HEK293 (cell line): ENCODE measurements at regions of chr4 and their contacts with region 1.

Region 1: DNA sequence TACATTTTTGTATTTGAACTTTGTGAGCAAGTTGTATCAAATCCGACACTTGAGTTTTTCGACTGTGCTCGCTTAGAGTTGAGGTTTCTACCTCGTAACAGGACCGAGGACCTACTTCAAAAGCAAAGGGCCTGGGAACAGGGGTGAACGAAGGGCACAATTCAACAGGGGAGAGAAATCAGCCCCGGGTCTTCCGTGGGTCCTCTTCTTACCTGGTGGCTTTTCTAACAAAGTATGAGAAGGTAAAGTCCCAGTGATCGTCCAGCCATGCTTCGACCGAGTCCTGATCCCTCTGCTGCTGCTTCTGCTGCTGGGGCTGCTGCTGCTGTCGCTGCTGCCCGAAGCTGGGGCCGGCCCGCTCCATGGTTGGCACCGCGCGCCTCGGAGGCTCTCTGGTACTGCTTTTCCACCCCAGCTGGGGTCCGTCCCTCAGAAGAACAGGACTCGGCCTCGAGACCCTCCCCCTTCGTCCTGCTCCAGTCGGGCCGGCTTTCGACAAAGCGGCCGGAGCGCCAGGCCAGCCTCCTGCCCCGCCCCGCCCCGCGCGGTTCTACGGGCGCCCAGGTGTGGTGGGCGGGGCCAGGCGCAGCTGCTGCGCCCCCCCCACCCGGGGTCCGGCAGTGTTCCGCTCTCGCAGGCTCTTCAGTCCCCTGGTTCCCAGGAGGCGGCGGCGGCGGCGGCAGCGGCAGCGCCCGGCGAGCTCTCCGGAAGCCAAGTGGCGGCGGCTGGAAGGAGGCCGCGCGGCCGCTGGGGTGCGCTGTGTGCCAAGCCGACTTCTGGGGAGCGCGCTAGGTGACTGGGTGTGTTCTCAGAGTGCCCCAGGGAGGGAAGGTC is at the start of gene PDE5A:
- H3K4me3 ChIP-seq: peak within 1 kb of the TSS; percentile 80
- H3K27ac ChIP-seq: peak within 1 kb of the TSS; percentile 93
- H3K4me1 ChIP-seq: peaks cover 5% of the 10 kb centered on the region; the same call in 1 of the 2 replicates
- CTCF ChIP-seq: peak; percentile 90

Region 2: GRCh38 chr4:119559044-119559647 is 69.4 kb before region 1 on chr4:
- CTCF ChIA-PET with region 1: interaction called, 18 read pairs
- POLR2A ChIA-PET with region 1: no interaction called
- H3K4me3 ChIP-seq: no peak overlapping the region
- H3K27ac ChIP-seq: no peak overlapping the region
- H3K4me1 ChIP-seq: no peaks in the 10 kb centered on the region
- CTCF ChIP-seq: no peak

Region 3: DNA sequence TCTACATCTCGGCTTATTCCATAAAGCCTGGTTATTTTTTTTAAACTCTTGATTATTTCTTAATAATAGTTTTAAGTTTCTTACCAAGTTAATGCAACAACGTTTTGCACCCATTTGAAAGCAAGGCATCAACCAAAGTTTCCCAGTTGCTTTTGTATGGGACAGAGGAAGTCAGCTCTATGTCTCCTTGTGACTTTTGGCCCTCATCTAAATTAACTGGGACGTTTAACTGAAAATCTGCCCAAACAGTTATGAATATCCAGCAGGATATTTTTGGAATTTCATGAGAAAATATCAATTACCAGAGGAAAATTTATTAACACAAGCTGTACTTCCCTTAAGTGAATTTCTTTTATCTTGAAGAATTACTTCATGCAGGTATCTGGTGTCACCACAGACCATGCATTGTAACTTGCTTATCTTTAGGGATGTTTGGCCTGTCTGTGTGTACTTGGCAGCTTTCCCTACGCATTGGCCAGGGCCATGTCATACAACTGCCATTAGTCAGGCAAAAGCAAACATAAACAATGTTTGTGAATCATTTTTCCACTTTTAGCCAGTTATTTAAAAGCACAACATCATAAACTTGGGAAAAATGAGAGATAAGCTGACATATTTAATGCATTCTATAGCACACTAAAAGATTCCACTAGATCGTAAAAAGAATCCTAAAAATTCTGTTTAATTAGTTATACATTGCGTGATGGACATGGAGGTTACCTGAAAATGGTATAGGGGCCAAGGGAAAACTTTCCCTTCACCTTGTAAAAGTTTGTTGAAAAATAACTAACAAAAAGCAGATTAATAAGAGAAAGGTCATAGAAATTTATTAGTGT is 101.5 kb after region 1 on chr4:
- CTCF ChIA-PET with region 1: interaction called, 15 read pairs
- POLR2A ChIA-PET with region 1: interaction called, 22 read pairs
- H3K4me3 ChIP-seq: no peak overlapping the region
- H3K27ac ChIP-seq: peak overlapping the region; percentile 84
- H3K4me1 ChIP-seq: peaks cover 20% of the 10 kb centered on the region
- CTCF ChIP-seq: no peak